Naive thymus-derived CD4-positive, alpha-beta T cell (primary cell): ENCODE measurements at regions of chr1 and their contacts with region 1.

Region 1: GRCh38 chr1:42941640-42942330 is 16.9 kb downstream of the SLC2A1 start:
- DNase-seq: peak in 1 of 9 donors; percentile 3
- ATAC-seq: no peak
- H3K4me3 ChIP-seq: no peak overlapping the region
- H3K4me3 Mint-ChIP-seq: peak overlapping the region in 4 of 10 donors; percentile 9 to 78 (median 65)
- H3K27ac ChIP-seq: no peak overlapping the region
- H3K27ac Mint-ChIP-seq: peak overlapping the region in 8 of 9 donors; percentile 69 to 95 (median 86)
- H3K4me1 ChIP-seq: peaks cover 82 to 95% of the 10 kb centered on the region in 2 donors
- H3K4me1 Mint-ChIP-seq: peaks cover 85 to 99% (median 97%) of the 10 kb centered on the region in 7 donors
- H3K27me3 ChIP-seq: no peaks in the 10 kb centered on the region
- H3K27me3 Mint-ChIP-seq: no peaks in the 10 kb centered on the region

Region 2: DNA sequence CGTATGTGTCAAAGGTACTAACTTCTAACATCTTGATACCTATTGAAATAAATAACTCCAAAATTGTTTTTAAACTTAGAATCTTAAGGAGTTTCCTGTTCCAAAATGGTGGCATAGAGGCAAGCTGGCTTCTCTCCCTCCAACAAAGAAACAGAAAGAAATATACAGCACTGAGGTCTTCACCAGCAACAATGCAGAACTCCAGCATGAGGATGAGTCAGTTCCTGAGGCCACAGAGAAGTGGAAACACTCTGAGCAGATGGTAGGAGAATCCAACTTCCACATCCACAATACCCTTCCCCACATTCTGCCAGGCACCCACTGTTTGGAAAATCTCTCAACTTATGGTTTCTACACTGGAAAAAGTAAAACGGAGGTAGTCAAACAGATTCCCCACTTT is 295.7 kb before region 1 on chr1:
- CTCF ChIA-PET with region 1: no interaction called
- POLR2A ChIA-PET with region 1: no interaction called
- intact Hi-C with region 1: no loop called
- DNase-seq: no peak
- ATAC-seq: no peak
- H3K4me3 ChIP-seq: no peak overlapping the region
- H3K4me3 Mint-ChIP-seq: no peak overlapping the region
- H3K27ac ChIP-seq: no peak overlapping the region
- H3K27ac Mint-ChIP-seq: no peak overlapping the region
- H3K4me1 ChIP-seq: no peaks in the 10 kb centered on the region
- H3K4me1 Mint-ChIP-seq: no peaks in the 10 kb centered on the region
- H3K27me3 ChIP-seq: no peaks in the 10 kb centered on the region
- H3K27me3 Mint-ChIP-seq: peaks cover 0 to 14% (median 0%) of the 10 kb centered on the region in 5 donors

Region 3: GRCh38 chr1:42931108-42931539 is 10.7 kb before region 1 on chr1:
- CTCF ChIA-PET with region 1: interaction called, 4 read pairs
- POLR2A ChIA-PET with region 1: interaction called, 134 read pairs
- intact Hi-C with region 1: loop called (anchors 1 kb)
- DNase-seq: peak; percentile 36 to 70 (median 58)
- ATAC-seq: peak; percentile 60
- H3K4me3 ChIP-seq: peak overlapping the region; percentile 41
- H3K4me3 Mint-ChIP-seq: peak overlapping the region; percentile 66 to 89 (median 80)
- H3K27ac ChIP-seq: peak overlapping the region; percentile 81
- H3K27ac Mint-ChIP-seq: peak overlapping the region; percentile 87 to 98 (median 93)
- H3K4me1 ChIP-seq: peaks cover 60 to 65% of the 10 kb centered on the region in 2 donors
- H3K4me1 Mint-ChIP-seq: peaks cover 43 to 81% (median 72%) of the 10 kb centered on the region in 7 donors
- H3K27me3 ChIP-seq: no peaks in the 10 kb centered on the region
- H3K27me3 Mint-ChIP-seq: no peaks in the 10 kb centered on the region